ENCODE measurements at regions of chr12 and their contacts with region 1.

Region 1: GRCh38 chr12:108731105-108731865 is at the start of gene CORO1C:
- DNase-seq: peak; percentile 93
- ATAC-seq: peak; percentile 80
- H3K4me3 ChIP-seq: peak within 1 kb of the TSS; percentile 90
- H3K27ac ChIP-seq: peak within 1 kb of the TSS; percentile 99
- H3K4me1 ChIP-seq: peaks cover 8% of the 10 kb centered on the region; the same call in 1 of the 2 replicates
- H3K27me3 ChIP-seq: no peaks in the 10 kb centered on the region
- CTCF ChIP-seq: peak; percentile 95
- POLR2A ChIP-seq: peak; percentile 96
- RAD21 ChIP-seq: peak; percentile 47
- total RNA-seq, gene CORO1C: 1,042 and 1,100 TPM in 2 replicates

Region 2: DNA sequence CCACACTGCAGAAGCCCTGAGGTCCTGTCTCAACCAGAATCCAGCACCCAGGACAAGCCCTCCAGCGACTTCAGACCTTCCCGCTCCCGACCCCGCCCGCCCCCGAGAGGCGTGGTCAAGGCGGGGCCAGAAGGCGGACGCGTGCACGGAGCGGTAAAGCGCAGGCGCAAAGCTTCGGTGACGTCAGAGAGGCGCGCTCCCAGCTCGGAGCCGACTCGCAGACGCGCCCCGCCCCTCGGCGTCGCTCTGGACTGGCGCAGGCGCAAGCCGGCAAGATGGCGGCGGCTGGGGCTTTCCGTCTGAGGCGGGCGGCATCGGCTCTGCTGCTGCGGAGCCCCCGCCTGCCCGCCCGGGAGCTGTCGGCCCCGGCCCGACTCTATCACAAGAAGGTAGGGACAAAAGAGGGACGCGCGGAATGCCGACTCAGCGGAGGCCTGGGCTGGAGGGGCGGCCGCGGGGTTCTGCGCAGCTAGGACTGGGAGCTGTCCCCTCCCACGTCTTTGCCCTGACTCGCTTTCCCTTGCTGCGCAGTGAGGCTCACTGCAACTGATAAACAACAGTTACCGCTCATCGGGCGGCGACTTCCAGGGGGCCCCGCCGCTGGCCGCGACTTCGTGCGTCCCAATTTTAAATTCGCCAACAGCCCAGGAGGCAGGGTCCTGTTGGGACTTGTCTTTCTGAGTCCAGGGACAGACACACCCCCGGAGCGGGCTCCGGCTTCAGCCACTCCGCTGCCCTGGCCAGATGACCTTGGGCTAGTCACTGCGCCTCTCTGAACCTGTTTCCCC is 168.7 kb before region 1 on chr12 and contains the start of gene ISCU:
- CTCF ChIA-PET with region 1: no interaction called
- POLR2A ChIA-PET with region 1: no interaction called
- dilution Hi-C with region 1: no loop called
- in situ Hi-C with region 1: no loop called
- intact Hi-C with region 1: loop called (anchors 2 kb)
- DNase-seq: peak; percentile 95
- ATAC-seq: peak; percentile 86
- H3K4me3 ChIP-seq: peak within 1 kb of the TSS; percentile 92
- H3K27ac ChIP-seq: peak within 1 kb of the TSS; percentile 89
- H3K4me1 ChIP-seq: no peaks in the 10 kb centered on the region
- H3K27me3 ChIP-seq: no peaks in the 10 kb centered on the region
- CTCF ChIP-seq: no peak
- POLR2A ChIP-seq: peak; percentile 88
- RAD21 ChIP-seq: no peak
- total RNA-seq, gene ISCU: 52.7 and 58.3 TPM in 2 replicates

Region 3: GRCh38 chr12:108664338-108665258 is 66.7 kb before region 1 on chr12:
- CTCF ChIA-PET with region 1: interaction called, 4 read pairs
- POLR2A ChIA-PET with region 1: interaction called, 4 read pairs
- dilution Hi-C with region 1: no loop called
- in situ Hi-C with region 1: no loop called
- intact Hi-C with region 1: loop called (anchors 1 kb)
- DNase-seq: peak; percentile 95
- ATAC-seq: peak; percentile 92
- H3K4me3 ChIP-seq: no peak overlapping the region
- H3K27ac ChIP-seq: peak overlapping the region; percentile 85
- H3K4me1 ChIP-seq: peaks cover 30% of the 10 kb centered on the region
- H3K27me3 ChIP-seq: no peaks in the 10 kb centered on the region
- CTCF ChIP-seq: peak; percentile 98
- POLR2A ChIP-seq: peak; percentile 31; the same call in 1 of the 2 replicates
- RAD21 ChIP-seq: peak; percentile 99

Region 4: DNA sequence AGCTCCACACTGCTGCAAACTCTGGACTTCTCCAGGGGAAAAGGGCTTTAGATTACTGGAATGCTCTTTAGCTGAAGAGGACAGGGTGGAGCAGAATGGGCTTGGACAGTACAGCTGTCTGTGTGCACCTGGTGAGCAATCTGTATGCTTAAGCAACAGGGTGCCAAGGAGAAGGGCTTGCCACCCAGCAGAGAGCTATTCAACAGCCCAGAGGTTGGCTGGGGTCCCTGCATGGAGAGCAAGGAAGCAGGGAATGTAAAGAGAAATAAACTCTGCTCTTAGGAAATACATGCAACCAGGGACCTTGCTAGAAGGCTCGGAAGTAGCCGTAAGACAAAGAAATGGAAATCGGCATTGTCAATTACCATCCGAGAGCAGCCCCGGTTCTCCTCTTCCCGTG is 53.0 kb after region 1 on chr12:
- CTCF ChIA-PET with region 1: interaction called, 7 read pairs
- POLR2A ChIA-PET with region 1: no interaction called
- dilution Hi-C with region 1: no loop called
- in situ Hi-C with region 1: no loop called
- intact Hi-C with region 1: loop called (anchors 5 kb)
- DNase-seq: no peak
- ATAC-seq: no peak
- H3K4me3 ChIP-seq: no peak overlapping the region
- H3K27ac ChIP-seq: no peak overlapping the region
- H3K4me1 ChIP-seq: peaks cover 10% of the 10 kb centered on the region
- H3K27me3 ChIP-seq: no peaks in the 10 kb centered on the region
- CTCF ChIP-seq: no peak
- POLR2A ChIP-seq: no peak
- RAD21 ChIP-seq: no peak

Measured in IMR-90 (cell line).